ENCODE measurements at regions of chr1 and their contacts with region 1.

Region 1: DNA sequence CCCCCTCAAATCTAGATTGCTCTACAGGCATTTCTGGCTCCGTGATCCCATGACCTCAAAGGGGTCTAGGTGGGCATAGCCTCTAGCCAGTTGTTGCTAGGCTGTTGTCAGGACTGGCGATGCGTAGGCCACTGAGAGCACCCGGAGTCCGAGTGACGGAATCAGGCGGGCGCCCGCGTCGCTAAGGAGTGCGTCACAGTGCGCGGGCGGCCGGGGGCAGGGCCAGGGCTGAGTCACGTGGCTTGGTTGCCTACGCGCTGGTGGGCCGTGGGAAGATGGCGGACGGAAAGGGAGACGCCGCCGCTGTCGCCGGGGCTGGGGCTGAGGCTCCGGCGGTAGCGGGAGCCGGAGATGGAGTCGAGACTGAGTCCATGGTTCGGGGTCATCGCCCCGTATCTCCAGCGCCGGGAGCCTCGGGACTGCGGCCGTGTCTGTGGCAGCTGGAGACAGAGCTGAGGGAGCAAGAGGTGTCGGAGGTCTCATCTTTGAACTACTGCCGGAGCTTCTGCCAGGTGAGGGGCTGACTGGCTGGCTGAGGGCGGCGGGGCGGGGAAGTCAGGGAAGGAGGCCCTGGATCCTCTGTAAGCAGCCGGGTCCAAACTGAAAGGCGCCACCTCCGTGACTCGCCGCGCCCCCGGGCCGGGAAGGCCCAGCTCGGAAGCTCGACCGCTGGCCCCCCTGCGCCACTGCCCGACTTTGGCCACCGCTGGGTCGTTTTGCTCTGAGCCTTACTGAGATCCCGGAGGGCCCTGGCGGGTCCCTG is at the start of gene RLF:
- DNase-seq: peak; percentile 85 to 98 (median 96)

Region 2: DNA sequence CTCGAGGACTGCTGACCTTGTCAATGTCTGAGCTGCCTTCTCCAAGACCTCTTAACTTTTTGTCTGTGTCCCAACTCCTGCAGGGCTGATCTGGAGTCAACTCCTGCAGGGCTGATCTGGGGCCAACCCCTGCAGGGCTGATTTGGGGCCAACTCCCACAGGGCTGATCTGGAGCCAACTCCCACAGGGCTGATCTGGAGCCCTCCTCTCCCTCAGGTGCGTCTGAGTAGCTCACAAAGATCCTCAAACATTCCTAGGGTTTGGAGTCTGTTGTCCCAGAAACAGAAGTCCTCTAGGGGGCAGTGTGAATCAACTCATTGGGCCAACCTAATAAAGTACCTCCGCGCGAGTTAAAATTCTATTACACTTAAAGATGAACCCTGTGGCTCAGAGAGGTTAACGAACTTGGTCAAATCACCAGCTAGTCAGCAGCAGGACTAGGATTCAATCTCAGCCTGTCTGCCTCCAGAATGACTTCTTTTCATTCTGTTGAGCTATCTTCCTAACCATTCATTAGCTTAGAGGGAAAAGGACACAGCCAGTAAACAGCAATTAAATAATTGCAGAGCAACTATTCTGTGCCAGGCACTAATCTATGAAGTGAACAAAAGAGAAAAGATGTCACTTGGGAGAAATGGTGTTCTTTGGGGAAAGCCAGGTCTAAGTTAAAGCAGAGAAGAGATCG is 17.3 kb before region 1 on chr1:
- intact Hi-C with region 1: no loop called
- DNase-seq: peak in 38 of 42 donors; percentile 7 to 88 (median 58)

Region 3: DNA sequence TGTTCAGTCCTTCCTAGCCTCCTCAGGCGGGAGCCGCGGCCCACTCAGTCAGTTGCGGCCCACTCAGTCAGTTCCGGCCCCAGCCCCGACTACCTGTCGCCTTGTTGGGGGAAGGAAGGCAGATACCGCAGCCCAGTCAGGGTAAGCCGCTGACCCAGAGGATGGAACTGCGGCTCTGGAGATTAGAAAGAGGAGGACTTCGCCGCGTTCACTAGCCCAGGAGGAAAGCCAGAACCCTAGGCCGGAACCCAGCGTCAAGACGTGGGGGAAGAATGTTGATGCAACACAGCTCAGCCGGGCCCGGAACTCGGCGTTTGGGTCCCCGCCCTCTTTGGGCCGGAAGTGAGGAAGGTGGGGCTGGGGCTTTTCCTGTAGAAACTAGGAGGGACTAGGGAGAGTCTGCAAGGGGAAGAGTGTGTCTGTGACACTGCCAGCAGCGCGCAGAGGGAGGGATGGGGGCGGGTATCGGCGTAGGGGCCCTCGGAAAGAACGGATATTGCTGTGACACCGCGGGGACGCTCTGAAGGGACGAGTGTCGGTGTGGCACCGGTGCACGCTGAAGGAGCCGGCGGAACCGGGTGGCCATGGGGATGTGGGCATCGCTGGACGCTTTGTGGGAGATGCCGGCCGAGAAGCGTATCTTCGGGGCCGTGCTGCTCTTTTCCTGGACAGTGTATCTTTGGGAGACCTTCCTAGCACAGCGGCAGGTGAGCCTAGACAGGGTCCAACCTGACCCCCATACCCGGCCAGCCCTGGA is 96.6 kb after region 1 on chr1 and contains the start of gene ZMPSTE24:
- intact Hi-C with region 1: loop called (anchors 2 kb)
- DNase-seq: peak; percentile 92 to 99 (median 96)

Region 4: DNA sequence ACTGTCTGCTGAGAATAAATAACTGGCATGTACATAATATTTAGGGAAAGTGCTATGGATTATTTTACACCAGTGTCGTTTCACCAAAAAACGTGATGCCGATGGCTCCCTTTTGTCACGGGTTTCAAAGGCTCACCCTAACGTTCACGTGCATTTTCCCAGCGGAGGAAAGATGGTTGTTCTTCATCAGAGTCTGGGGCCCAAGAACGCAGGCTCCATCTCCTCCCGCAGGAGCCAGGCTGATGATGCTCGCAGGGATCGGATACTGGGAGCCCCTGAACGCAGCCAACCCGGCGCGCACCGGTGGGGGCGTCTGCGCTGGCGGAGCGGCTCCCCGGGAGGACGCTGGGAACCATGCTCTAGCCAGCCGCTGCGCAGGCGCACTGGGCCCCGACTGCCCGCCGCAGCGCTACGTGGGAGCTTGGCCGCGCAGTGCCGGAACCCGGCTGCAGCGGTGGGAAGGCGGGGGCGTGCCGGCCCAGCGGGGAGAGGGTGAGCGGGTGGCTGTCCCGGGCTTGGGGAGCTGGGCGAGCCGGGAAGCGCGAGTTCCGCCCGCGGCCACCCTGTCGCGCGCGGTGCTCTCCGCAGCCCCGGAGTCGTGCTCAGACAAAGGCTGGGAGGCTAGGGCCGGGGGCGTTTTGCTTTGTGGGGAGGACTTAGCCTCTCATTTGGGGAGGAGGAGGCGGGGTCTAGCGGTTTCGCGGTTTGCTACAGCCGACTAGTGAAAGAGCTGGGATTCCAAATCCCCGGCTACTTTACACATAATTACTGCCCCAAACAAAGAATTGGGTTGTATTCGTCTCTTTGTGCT is 288.6 kb after region 1 on chr1 and contains the start of gene ZFP69B:
- intact Hi-C with region 1: loop called (anchors 5 kb)
- DNase-seq: peak; percentile 70 to 97 (median 92)